Psoas muscle (tissue), 8 donors: ENCODE measurements at regions of chr15 and their contacts with region 1.

Region 1: GRCh38 chr15:60585743-60586708 is 107.1 kb upstream of the ICE2 start:
- DNase-seq: no peak
- ATAC-seq: peak; percentile 71 to 83 (median 76)
- H3K4me3 ChIP-seq: no peak overlapping the region
- H3K27ac ChIP-seq: peak overlapping the region; percentile 31
- H3K4me1 ChIP-seq: peaks cover 75% of the 10 kb centered on the region
- H3K27me3 ChIP-seq: no peaks in the 10 kb centered on the region
- CTCF ChIP-seq: peak; percentile 96

Region 2: GRCh38 chr15:60932051-60932915 is 346.3 kb after region 1 on chr15:
- intact Hi-C with region 1: loop called in 1 of 2 experiments (anchors 5 kb)
- DNase-seq: peak; percentile 79 to 93
- ATAC-seq: peak; percentile 90 to 98 (median 94)
- H3K4me3 ChIP-seq: no peak overlapping the region
- H3K27ac ChIP-seq: peak overlapping the region; percentile 61
- H3K4me1 ChIP-seq: peaks cover 40% of the 10 kb centered on the region
- H3K27me3 ChIP-seq: no peaks in the 10 kb centered on the region
- CTCF ChIP-seq: peak; percentile 60